Ascending aorta (tissue), 2 donors: ENCODE measurements at regions of chr1 and their contacts with region 1.

Region 1: DNA sequence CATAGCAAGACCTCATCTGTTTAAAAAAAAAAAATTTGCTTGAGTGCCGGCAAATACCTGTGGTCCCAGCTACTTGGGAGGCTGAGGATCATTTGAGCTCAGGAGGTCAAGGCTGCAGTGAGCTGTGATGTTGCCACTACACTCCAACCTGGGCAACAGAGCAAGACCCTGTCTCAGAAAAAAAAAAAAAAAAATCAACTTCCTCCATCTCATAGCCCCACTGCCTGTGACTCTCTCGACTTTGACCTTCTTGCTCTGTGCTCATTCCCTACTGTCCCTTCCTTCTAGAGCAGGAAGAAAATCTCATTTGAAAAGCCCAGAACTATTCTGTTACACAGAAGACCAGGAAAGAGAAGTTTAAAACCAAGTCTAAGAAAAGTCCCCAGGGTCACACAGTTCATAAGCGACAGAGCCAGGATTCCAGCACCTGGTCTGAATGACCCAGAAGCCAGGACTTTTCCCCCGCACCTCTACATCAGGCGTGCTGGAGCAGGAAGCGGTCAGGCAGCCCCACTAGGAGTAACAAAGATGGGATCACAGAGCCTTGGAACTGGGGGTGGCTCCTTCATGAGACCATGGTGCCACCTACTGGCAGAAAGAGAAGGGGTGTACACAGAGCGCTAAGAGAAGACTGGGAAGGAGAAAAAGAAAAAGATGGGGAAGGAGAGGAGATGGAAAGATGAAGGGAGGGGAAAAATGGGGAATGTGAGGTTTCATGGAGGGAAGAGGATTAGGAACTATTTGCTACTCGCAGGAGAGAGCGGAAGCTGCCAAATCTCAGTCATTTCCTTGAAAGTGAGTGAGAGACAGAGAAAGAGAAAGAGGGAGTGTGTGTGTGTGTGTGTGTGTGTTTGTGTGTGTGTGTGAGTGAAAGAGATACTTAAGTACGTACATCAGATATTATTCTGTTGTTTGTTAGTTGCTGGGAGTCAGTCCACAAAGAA is 3.1 kb upstream of the P3R3URF start:
- DNase-seq: peak; percentile 27 to 91
- H3K4me3 ChIP-seq: no peak overlapping the region
- H3K27ac ChIP-seq: peak overlapping the region in 1 of 2 donors; percentile 44
- H3K4me1 ChIP-seq: peaks cover 8 to 13% of the 10 kb centered on the region in 2 donors
- H3K27me3 ChIP-seq: no peaks in the 10 kb centered on the region
- CTCF ChIP-seq: peak; percentile 81 to 96 (median 88)

Region 2: DNA sequence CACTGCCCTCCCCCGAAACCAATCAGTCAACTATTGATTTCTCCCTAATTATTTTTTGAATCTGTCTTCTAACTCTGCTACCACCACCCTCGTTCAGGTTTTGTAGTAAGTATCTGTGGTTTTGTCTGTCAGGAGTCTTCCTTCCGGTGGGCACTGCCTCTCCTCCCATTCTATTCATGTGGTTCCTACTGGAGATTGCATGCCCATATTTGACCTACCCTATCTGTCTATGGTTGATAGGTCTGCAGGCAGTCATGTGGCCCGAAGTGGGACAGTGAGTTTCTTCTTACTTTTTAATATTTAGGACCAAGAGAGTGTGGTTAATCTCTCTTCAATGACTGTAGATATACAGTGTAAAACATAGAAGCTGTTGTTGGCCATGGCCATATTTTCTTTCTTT is 393.8 kb before region 1 on chr1:
- intact Hi-C with region 1: no loop called
- DNase-seq: no peak
- H3K4me3 ChIP-seq: no peak overlapping the region
- H3K27ac ChIP-seq: no peak overlapping the region
- H3K4me1 ChIP-seq: no peaks in the 10 kb centered on the region
- H3K27me3 ChIP-seq: no peaks in the 10 kb centered on the region
- CTCF ChIP-seq: no peak

Region 3: DNA sequence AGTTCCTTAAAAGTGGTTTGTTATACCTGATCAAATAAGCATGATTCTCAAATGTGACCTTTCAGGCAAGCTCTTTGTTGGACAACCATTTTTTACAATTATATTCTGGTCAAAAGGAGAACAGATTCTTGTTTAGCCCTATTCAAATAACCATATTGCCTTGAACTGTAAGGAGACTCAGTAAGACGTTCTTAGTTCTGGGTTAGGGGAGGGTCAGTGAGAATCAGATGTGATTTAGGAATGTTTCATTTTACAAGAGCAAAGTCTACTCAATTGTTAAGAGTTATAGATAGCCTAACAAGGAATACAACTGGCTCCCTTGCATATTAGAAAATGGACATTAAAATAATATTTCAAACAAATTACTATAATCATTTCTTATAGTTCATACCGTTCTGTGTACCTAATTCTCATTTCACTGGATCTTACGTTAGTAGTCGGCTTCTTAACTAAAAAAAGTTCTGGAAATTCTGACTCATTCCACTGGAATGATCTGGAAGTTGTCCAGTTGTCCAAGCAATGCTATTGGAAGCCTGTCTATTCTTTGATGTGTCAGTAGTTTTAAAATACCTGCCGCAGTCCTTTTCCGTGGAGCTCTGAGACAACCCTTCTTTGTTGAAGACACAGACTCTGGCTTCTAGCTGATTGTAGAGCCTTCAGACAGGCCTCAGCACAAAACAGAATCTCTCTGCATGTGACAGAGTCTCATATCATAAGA is 287.2 kb before region 1 on chr1:
- intact Hi-C with region 1: loop called (anchors 5 kb)
- DNase-seq: no peak
- H3K4me3 ChIP-seq: peak overlapping the region in 1 of 2 donors; percentile 3
- H3K27ac ChIP-seq: peak overlapping the region; percentile 51 to 55
- H3K4me1 ChIP-seq: peaks cover 0 to 13% of the 10 kb centered on the region in 2 donors
- H3K27me3 ChIP-seq: no peaks in the 10 kb centered on the region
- CTCF ChIP-seq: no peak

Region 4: GRCh38 chr1:46132529-46133180 is 46.8 kb before region 1 on chr1 and contains the start of gene PIK3R3:
- intact Hi-C with region 1: loop called (anchors 2 kb)
- DNase-seq: peak; percentile 90 to 99
- H3K4me3 ChIP-seq: peak within 1 kb of the TSS; percentile 71 to 83
- H3K27ac ChIP-seq: peak within 1 kb of the TSS; percentile 90 to 97
- H3K4me1 ChIP-seq: peaks cover 5 to 16% of the 10 kb centered on the region in 2 donors
- H3K27me3 ChIP-seq: no peaks in the 10 kb centered on the region
- CTCF ChIP-seq: peak in 2 of 3 experiments; percentile 10 to 18
- total RNA-seq, gene PIK3R3: 33.1 TPM

Region 5: DNA sequence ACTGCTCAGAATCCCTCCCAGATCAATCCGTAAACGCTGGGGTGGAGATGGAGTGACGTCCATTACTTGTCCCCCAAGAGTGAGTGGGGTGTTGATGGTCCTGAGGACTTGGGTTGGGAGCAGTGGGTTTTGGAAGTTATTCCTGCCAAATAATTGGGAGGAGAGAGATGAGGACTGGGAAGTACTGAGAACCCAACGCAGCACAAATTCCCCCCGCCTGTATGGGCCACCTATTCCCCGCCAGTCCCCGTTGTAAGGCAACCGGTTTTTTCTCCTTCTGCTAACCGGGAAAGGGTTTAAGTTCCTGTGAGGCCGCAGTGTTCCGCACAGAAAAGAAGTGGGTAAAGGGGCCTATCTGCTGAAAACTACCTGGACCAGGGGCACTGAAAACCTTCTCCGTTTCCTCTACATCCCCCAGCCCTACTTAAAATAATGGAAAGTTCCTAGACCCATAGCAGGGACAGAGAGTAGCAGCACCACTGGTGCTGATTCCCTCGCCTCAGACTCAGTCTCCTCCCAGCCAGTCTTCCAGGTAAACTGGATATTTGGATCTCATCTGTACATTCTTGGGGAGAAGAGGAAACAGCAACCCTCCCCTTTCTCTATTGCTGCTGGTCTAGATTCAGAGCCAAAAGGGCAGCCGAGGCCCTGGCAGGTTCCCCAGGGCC is 24.5 kb after region 1 on chr1:
- intact Hi-C with region 1: loop called (anchors 1 kb)
- DNase-seq: no peak
- H3K4me3 ChIP-seq: peak overlapping the region; percentile 83 to 87
- H3K27ac ChIP-seq: peak overlapping the region; percentile 90 to 95
- H3K4me1 ChIP-seq: peaks cover 1 to 18% of the 10 kb centered on the region in 2 donors
- H3K27me3 ChIP-seq: no peaks in the 10 kb centered on the region
- CTCF ChIP-seq: no peak

Region 6: GRCh38 chr1:46247436-46248121 is 68.2 kb after region 1 on chr1 and contains the start of gene RAD54L:
- intact Hi-C with region 1: loop called (anchors 1 kb)
- DNase-seq: peak; percentile 92 to 99
- H3K4me3 ChIP-seq: peak within 1 kb of the TSS; percentile 75 to 80
- H3K27ac ChIP-seq: peak within 1 kb of the TSS; percentile 64 to 67
- H3K4me1 ChIP-seq: peaks cover 0 to 13% of the 10 kb centered on the region in 2 donors
- H3K27me3 ChIP-seq: no peaks in the 10 kb centered on the region
- CTCF ChIP-seq: no peak
- total RNA-seq, gene RAD54L: not detected

Region 7: GRCh38 chr1:46262508-46262907 is 83.1 kb after region 1 on chr1:
- intact Hi-C with region 1: no loop called
- DNase-seq: no peak
- H3K4me3 ChIP-seq: no peak overlapping the region
- H3K27ac ChIP-seq: no peak overlapping the region
- H3K4me1 ChIP-seq: no peaks in the 10 kb centered on the region
- H3K27me3 ChIP-seq: no peaks in the 10 kb centered on the region
- CTCF ChIP-seq: no peak